Common myeloid progenitor, CD34-positive (primary cell): ENCODE measurements at regions of chr1 and their contacts with region 1.

Region 1: DNA sequence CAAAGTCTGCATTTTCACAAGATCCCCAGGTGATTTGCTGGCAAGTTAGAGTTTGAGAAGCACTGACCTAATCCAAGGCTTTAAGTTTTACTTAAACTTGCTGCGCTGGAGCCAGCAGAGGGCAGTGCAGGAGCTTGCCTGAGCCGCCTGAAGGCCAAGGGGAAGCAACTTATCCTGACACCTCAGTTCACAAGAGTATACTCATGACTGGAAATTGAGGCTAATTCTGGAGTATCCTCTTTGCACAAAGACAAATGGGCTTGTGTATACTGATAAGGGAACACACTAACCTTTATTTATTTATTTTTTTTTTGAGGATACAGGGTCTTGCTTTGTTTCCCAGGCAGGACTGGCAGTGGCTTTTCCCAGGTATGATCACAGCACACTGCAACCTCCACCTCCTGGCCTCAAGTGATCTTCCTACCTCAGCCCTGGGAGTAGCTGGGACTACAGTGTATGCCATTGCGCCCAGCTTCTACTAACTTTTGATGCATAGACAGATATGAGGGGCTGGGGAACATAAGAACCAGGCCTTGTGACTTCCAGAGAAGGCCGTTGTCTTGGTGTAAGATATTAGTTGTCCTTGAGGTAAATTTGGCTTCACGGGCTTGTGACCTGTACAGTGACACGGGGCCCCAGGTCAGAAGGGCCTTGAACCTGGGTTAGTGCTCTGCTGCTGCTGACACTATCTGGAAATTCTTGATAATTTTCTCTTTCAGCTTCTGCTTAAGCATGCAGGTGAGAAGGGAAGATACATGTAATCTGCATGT is 29.0 kb upstream of the SLAMF1 start:
- DNase-seq: peak; percentile 71 to 84 (median 80)
- H3K4me3 ChIP-seq: no peak overlapping the region
- H3K27ac ChIP-seq: no peak overlapping the region
- H3K4me1 ChIP-seq: peaks cover 0 to 29% (median 10%) of the 10 kb centered on the region in 4 experiments
- H3K27me3 ChIP-seq: no peaks in the 10 kb centered on the region

Region 2: DNA sequence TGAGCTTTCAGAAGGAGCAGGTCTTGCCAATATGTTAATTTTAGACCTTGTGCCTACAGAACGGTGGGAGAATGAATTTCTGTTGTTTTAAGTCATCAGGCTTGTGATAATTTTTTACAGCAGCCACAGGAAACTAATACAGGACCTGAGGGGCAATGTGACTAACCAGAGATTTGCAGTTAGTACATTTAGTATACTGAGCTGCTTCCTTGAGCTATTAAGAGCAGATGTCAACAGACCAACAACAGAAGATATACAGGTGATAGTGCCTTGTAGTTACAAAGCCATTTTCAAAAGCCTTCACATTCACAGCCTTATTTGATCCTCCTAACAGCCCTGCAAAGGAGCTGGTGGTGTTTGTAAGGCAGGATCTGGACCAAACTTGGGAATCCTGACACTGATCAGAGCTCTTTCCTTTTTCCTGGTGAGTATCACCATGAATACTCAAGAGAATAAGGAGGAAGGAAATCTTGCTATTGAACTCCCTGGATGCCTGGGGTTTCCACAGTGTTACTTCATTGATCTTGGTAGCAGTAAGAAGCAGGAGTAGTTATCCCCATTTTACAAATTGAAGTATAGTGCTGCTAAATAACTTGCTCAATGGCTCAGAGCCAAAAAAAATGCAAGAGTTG is 24.3 kb before region 1 on chr1:
- CTCF ChIA-PET with region 1: interaction called, 13 read pairs
- POLR2A ChIA-PET with region 1: no interaction called
- DNase-seq: peak in 1 of 3 donors; percentile 54
- H3K4me3 ChIP-seq: no peak overlapping the region
- H3K27ac ChIP-seq: no peak overlapping the region
- H3K4me1 ChIP-seq: peaks cover 5 to 35% (median 17%) of the 10 kb centered on the region in 4 experiments
- H3K27me3 ChIP-seq: no peaks in the 10 kb centered on the region

Region 3: DNA sequence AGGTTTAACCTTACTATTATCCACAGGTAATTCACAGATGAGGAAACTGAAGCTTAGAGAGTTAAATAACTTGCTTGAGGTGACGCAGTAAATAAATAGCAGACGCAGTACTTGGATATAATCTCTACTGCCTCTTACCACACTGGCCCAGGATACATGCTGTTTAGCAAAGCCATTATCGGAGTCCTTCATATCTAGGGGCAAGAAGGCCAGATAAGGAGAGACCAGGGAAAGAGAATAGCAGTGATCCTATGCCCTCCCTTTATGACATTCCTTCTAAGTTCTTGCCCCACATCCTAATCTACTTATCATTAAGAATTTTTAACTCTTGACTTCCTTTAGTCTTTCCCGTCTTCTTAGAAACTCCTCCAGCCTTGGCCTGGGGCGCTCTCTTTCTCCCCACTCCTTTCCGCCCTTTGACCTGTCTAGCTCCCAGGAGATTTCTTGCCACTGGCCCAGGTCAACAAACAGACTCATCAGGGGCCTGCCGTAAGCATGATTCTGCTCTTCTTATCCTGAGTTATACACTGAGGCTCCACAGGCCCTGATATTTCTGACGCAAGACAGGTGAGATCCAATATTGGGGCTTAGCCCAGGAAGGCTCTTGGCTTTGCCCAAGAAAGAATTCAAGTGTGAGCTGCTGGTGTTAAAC is 17.5 kb before region 1 on chr1:
- CTCF ChIA-PET with region 1: interaction called, 16 read pairs
- POLR2A ChIA-PET with region 1: no interaction called
- DNase-seq: no peak
- H3K4me3 ChIP-seq: no peak overlapping the region
- H3K27ac ChIP-seq: no peak overlapping the region
- H3K4me1 ChIP-seq: peaks cover 4 to 30% (median 5%) of the 10 kb centered on the region in 4 experiments
- H3K27me3 ChIP-seq: no peaks in the 10 kb centered on the region

Region 4: GRCh38 chr1:160664573-160665051 is 11.2 kb before region 1 on chr1:
- CTCF ChIA-PET with region 1: interaction called, 16 read pairs
- POLR2A ChIA-PET with region 1: no interaction called
- DNase-seq: no peak
- H3K4me3 ChIP-seq: no peak overlapping the region
- H3K27ac ChIP-seq: no peak overlapping the region
- H3K4me1 ChIP-seq: peaks cover 12 to 44% (median 17%) of the 10 kb centered on the region in 4 experiments
- H3K27me3 ChIP-seq: no peaks in the 10 kb centered on the region